ENCODE measurements at regions of chr4 and their contacts with region 1.

Region 1: DNA sequence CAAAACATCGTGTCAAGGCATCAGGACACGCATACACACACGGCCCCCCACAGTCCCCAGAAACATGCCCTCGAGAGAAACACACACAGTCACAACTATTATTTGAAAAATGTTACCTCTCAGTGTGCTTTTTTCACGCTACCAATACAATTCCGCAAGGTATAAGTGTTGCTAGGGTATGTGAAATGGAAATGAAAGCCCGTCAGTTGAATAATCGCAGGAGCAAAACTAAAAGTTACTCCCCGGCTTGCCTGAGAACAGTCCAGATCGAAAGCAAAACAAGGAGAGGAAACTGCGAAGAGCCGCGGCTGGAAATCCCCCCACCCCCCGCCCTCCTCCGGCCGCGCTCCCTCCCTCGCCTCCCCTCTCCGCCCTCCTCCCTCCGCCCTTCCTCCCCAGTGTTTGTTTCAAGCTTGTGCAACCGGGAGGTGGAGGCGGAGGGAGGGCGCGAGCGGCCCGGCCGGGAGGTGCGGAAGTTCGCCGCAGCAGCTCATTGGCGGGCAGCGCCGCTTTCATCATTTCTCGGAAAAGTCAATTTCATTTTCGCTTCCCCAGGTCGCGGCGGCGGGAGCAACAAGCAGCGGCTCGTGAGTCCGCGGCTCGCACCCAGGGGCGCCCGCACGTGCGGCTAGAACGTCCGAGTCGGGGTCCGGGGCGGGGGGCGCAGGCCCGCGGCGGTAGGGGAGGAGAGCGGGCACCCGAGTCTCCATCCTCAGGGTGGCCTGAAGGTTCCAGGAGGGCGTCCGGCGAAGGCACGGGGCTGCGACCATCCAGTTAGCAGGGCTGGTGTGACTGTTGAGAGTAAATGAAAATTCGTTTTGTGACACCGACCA is at the start of gene IRF2:
- DNase-seq: peak; percentile 94 to 96
- H3K4me3 ChIP-seq: peak within 1 kb of the TSS; percentile 70
- H3K4me3 Mint-ChIP-seq: peak within 1 kb of the TSS; percentile 98
- H3K27ac Mint-ChIP-seq: peak within 1 kb of the TSS; percentile 89
- H3K4me1 ChIP-seq: peaks cover 2% of the 10 kb centered on the region
- H3K4me1 Mint-ChIP-seq: peaks cover 20% of the 10 kb centered on the region
- H3K27me3 ChIP-seq: no peaks in the 10 kb centered on the region
- H3K27me3 Mint-ChIP-seq: no peaks in the 10 kb centered on the region
- CTCF ChIP-seq: no peak
- total RNA-seq, gene IRF2: 9.2 and 11.5 TPM in 2 replicates

Region 2: GRCh38 chr4:184263910-184264732 is 210.4 kb before region 1 on chr4:
- CTCF ChIA-PET with region 1: interaction called, 3 read pairs
- POLR2A ChIA-PET with region 1: no interaction called
- intact Hi-C with region 1: loop called (anchors 5 kb)
- DNase-seq: peak; percentile 85 to 86
- H3K4me3 ChIP-seq: no peak overlapping the region
- H3K4me3 Mint-ChIP-seq: peak overlapping the region; percentile 13
- H3K27ac Mint-ChIP-seq: no peak overlapping the region
- H3K4me1 ChIP-seq: no peaks in the 10 kb centered on the region
- H3K4me1 Mint-ChIP-seq: peaks cover 14% of the 10 kb centered on the region
- H3K27me3 ChIP-seq: no peaks in the 10 kb centered on the region
- H3K27me3 Mint-ChIP-seq: peaks cover 3% of the 10 kb centered on the region
- CTCF ChIP-seq: peak; percentile 81

Region 3: DNA sequence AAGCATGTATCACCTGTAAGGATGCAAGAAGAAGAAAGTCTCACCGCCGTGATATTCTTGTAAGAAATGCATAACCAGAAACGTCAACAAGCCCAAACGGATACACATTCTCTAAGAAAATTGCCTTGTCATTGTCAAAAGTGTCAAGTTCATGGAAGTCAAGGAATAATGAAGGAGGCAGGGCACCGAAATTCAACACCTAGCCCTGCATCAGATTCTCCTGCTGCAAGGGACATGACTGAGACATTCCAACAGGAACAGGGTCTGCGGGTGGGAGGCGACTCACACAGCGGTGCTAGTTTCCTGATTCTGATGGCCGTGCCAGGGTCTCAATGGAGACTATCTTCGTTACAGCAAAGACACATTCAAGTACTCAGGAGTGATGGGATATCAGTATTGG is 26.8 kb before region 1 on chr4:
- CTCF ChIA-PET with region 1: no interaction called
- POLR2A ChIA-PET with region 1: interaction called, 7 read pairs
- intact Hi-C with region 1: loop called (anchors 1 kb)
- DNase-seq: no peak
- H3K4me3 ChIP-seq: no peak overlapping the region
- H3K4me3 Mint-ChIP-seq: no peak overlapping the region
- H3K27ac Mint-ChIP-seq: no peak overlapping the region
- H3K4me1 ChIP-seq: no peaks in the 10 kb centered on the region
- H3K4me1 Mint-ChIP-seq: no peaks in the 10 kb centered on the region
- H3K27me3 ChIP-seq: no peaks in the 10 kb centered on the region
- H3K27me3 Mint-ChIP-seq: no peaks in the 10 kb centered on the region
- CTCF ChIP-seq: no peak

Region 4: DNA sequence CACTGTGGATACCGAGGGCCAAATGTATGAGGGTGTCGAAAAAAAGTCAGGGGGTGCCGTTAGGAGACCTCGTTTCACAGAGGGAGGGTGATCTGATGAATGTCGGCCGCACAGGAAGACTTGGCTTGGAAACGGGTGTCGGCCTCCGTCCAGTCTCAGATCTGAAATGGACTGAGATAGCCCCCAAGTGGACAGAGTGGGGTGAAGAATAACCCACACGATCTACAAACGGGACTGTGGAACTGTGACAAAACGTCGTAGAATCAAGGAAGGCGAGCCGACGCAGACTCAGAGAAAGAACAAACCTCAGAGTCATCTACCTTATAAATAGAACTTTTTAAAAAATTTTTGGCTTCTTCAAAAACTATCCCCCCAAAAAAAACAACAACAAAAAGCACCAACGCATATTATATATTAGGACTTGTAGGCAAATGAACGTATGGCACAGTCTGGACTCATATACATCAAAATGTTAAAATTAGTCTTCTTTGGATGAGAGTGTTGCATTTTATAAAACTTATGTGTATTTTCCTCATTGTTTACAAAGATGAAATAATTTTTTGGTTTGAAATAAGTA is 63.6 kb after region 1 on chr4:
- CTCF ChIA-PET with region 1: no interaction called
- POLR2A ChIA-PET with region 1: interaction called, 21 read pairs
- intact Hi-C with region 1: loop called (anchors 1 kb)
- DNase-seq: peak; percentile 83
- H3K4me3 ChIP-seq: peak overlapping the region; percentile 39
- H3K4me3 Mint-ChIP-seq: peak overlapping the region; percentile 86
- H3K27ac Mint-ChIP-seq: peak overlapping the region; percentile 90
- H3K4me1 ChIP-seq: peaks cover 16% of the 10 kb centered on the region
- H3K4me1 Mint-ChIP-seq: peaks cover 23% of the 10 kb centered on the region
- H3K27me3 ChIP-seq: no peaks in the 10 kb centered on the region
- H3K27me3 Mint-ChIP-seq: no peaks in the 10 kb centered on the region
- CTCF ChIP-seq: peak; percentile 63 to 67

Region 5: DNA sequence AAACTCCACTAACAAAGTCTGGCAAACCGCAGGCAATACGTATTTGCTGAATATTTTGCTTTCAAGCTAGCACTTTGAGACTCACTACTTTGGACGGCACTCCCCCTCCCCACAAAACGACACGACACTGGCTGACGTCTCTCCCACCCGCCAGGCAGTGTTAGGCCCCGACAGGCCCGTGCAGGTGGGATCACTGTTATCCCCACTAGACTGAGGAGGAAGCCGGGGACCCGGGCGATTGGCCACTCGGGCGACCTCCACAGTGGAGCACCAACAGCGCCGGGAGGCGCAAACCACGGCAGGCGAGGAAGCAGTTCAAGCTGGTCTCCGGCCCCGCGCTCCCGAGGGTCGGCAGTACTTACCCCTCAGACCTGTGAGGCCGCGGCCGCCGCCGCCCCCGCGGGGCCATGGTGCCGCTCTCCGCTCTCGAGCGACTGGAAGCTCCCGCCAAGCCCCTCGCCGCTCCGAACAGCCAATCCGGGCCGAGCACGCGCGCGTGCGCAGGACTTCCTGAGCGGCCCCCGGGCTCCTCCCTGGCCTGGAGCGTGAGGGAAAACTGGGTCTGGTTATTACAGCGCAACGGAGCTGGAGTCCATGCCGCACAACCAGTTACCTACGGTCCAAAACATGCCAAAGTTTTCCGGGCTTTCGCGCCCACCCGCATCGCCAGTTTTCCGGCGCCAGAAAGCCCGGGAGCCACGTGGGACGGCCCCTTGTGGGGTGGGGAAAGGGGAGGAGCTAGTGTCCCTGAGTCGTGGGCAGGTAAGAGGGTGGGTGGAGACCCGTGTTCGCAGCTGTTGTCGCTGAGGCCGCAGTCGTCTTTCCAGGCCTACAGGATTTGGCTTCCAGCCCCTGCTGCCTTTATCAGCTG is 259.4 kb after region 1 on chr4 and contains the start of gene CENPU:
- CTCF ChIA-PET with region 1: interaction called, 4 read pairs
- POLR2A ChIA-PET with region 1: interaction called, 7 read pairs
- intact Hi-C with region 1: loop called (anchors 10 kb)
- DNase-seq: peak; percentile 97
- H3K4me3 ChIP-seq: peak within 1 kb of the TSS; percentile 64
- H3K4me3 Mint-ChIP-seq: peak within 1 kb of the TSS; percentile 99
- H3K27ac Mint-ChIP-seq: peak within 1 kb of the TSS; percentile 94
- H3K4me1 ChIP-seq: no peaks in the 10 kb centered on the region
- H3K4me1 Mint-ChIP-seq: no peaks in the 10 kb centered on the region
- H3K27me3 ChIP-seq: no peaks in the 10 kb centered on the region
- H3K27me3 Mint-ChIP-seq: no peaks in the 10 kb centered on the region
- CTCF ChIP-seq: no peak
- total RNA-seq, gene CENPU: 42.8 and 52.0 TPM in 2 replicates